HepG2 (cell line): ENCODE measurements at regions of chrX and their contacts with region 1.

Region 1: DNA sequence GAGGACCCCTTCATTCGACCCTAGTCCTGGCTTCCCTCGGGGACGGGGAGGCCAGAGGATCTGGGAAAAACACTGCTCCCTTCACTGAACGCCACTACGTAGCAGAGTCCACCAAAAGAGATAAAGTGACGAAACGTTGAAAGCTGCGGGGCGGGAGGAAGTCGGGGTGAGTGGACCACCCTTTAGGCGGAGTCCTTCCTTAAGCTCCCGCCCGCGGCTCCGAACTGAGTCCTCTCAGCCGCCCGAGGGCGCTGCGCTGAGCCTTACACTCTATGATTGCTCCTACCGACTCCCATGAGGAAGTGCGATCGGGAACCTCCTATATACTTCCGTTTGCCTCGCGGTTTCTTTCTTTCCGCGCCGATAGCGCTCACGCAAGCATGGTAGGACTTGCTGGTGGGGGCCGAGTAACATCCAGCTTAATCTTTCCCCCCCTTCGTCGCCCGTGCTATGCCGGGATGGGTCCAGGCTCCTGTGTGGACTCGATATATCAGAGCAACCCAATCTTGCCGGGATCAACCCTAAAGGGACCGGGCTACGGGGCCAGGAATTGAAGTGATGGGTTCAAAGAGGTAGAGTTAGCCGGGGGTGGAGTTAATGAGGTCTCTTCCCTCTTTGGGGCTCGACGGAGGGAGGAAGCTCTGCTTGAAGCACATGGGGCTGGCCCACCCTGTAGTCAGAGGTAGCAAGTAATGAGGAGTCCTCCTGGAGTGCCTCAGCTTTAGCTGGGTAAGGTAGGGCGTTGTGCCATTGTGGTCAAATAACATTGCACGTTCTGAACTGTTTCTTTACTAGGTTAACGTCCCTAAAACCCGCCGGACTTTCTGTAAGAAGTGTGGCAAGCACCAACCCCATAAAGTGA is at the start of gene RPL36A:
- DNase-seq: peak; percentile 87
- ATAC-seq: peak; percentile 99
- H3K4me3 ChIP-seq: peak within 1 kb of the TSS; percentile 69 to 78 (median 69); a peak in 5 of 6 replicates
- H3K27ac ChIP-seq: peak within 1 kb of the TSS; percentile 76
- H3K4me1 ChIP-seq: peaks cover 23% of the 10 kb centered on the region
- H3K27me3 ChIP-seq: no peaks in the 10 kb centered on the region; a peak in 1 of 5 replicates
- CTCF ChIP-seq: peak; percentile 83
- EP300 ChIP-seq: no peak
- POLR2A ChIP-seq: peak; percentile 89 to 98
- RAD21 ChIP-seq: no peak
- total RNA-seq, gene RPL36A: 1,152 and 1,356 TPM in 2 replicates

Region 2: GRCh38 chrX:101164766-101165590 is 225.9 kb before region 1 on chrX:
- CTCF ChIA-PET with region 1: no interaction called
- POLR2A ChIA-PET with region 1: no interaction called
- in situ Hi-C with region 1: no loop called
- intact Hi-C with region 1: no loop called
- DNase-seq: no peak
- ATAC-seq: no peak
- H3K4me3 ChIP-seq: no peak overlapping the region
- H3K27ac ChIP-seq: no peak overlapping the region
- H3K4me1 ChIP-seq: no peaks in the 10 kb centered on the region
- H3K27me3 ChIP-seq: no peaks in the 10 kb centered on the region
- CTCF ChIP-seq: no peak
- EP300 ChIP-seq: no peak
- POLR2A ChIP-seq: no peak
- RAD21 ChIP-seq: no peak

Region 3: DNA sequence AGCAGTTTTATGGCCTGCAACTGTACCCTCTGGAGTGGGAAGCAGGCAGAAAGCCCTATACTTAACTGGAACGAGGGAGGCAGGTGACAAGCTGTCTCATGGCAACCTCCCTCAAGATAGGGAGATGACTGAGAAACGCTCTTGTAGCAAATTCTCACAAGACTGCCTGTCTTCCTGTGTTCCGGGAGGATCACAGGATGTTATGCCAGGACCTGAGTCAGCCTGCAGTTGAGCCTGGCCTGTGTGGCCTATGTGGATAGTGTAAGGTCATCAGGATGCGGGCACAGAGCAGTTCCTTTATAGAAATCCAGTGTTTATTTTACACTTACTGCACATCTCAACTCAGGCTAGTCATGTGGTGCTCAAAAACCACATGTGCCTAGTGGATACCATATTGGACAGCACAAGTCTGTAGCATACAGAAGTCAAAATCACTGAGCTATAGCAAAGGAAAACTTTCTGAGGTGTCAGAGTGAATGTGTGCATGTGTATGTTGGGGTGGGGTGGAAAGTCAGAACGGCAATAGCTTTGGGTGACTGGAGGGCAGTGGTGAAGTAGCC is 124.9 kb before region 1 on chrX:
- CTCF ChIA-PET with region 1: no interaction called
- POLR2A ChIA-PET with region 1: no interaction called
- in situ Hi-C with region 1: no loop called
- intact Hi-C with region 1: no loop called
- DNase-seq: no peak
- ATAC-seq: no peak
- H3K4me3 ChIP-seq: no peak overlapping the region
- H3K27ac ChIP-seq: no peak overlapping the region
- H3K4me1 ChIP-seq: no peaks in the 10 kb centered on the region
- H3K27me3 ChIP-seq: no peaks in the 10 kb centered on the region
- CTCF ChIP-seq: no peak
- EP300 ChIP-seq: no peak
- POLR2A ChIP-seq: no peak
- RAD21 ChIP-seq: no peak

Region 4: GRCh38 chrX:101348452-101349192 is 42.3 kb before region 1 on chrX and contains the start of gene TIMM8A:
- CTCF ChIA-PET with region 1: no interaction called
- POLR2A ChIA-PET with region 1: interaction called, 35 read pairs
- in situ Hi-C with region 1: no loop called
- intact Hi-C with region 1: loop called (anchors 5 kb)
- DNase-seq: peak; percentile 65
- ATAC-seq: peak; percentile 98
- H3K4me3 ChIP-seq: peak within 1 kb of the TSS; percentile 66 to 75 (median 71)
- H3K27ac ChIP-seq: peak within 1 kb of the TSS; percentile 85
- H3K4me1 ChIP-seq: 0 out of 2 replicates have a peak, but pooled peaks cover 8% of the 10 kb centered on the region
- H3K27me3 ChIP-seq: no peaks in the 10 kb centered on the region
- CTCF ChIP-seq: no peak
- EP300 ChIP-seq: no peak
- POLR2A ChIP-seq: peak; percentile 79 to 90
- RAD21 ChIP-seq: no peak
- total RNA-seq, gene TIMM8A: 25.5 and 36.6 TPM in 2 replicates

Region 5: DNA sequence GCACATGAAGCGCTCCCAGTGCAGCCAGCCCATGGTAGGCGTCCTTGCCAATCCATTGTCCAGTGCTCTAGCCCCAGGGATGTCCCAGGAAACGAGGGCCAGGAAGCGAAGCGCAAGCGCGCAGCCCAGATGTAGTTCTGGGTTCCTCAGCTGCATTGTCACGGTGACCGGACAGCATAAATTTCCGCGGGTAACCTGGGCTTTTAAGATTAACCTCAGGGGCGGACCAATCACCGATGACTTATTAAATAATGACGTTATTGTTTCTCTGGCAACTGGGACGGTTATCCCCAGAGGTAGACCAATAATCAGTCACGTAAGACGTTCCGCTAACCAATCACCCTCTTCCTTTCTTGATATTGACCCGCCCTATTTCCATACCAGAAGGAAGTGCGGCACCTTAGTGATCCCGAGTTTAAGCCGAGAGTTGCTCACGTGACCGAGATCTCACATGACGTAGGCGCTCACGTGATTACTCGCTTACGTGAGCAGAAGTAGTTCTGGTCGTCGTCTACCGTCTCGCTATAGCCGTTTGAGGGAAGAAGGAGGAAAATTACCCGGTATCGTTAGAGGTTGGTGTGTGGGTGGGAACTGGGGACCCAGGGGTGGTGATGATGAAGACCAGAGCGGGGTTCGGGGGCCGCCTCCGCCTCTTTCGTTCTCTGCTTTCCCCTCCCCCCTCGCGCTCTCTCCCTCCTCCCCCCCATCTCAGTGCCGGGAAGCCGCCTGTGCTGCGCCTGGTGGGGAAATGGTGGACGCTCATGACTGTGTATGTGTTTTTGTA is 17.0 kb after region 1 on chrX and contains the starts of genes GLA and HNRNPH2:
- CTCF ChIA-PET with region 1: no interaction called
- POLR2A ChIA-PET with region 1: interaction called, 14 read pairs
- in situ Hi-C with region 1: no loop called
- intact Hi-C with region 1: loop called (anchors 2 kb)
- DNase-seq: peak; percentile 97
- ATAC-seq: peak; percentile 94
- H3K4me3 ChIP-seq: peak within 1 kb of the TSS; percentile 68 to 82 (median 79)
- H3K27ac ChIP-seq: peak within 1 kb of the TSS; percentile 97
- H3K4me1 ChIP-seq: peaks cover 8% of the 10 kb centered on the region
- H3K27me3 ChIP-seq: no peaks in the 10 kb centered on the region
- CTCF ChIP-seq: no peak
- EP300 ChIP-seq: no peak
- POLR2A ChIP-seq: peak; percentile 70 to 90
- RAD21 ChIP-seq: no peak
- total RNA-seq, gene GLA: 33.3 and 59.3 TPM in 2 replicates
- total RNA-seq, gene HNRNPH2: 56.9 and 80.1 TPM in 2 replicates